Activated CD4-positive, alpha-beta T cell treated with anti-CD3 and anti-CD28 coated beads for 36 hours (primary cell): ENCODE measurements at regions of chr16 and their contacts with region 1.

Region 1: DNA sequence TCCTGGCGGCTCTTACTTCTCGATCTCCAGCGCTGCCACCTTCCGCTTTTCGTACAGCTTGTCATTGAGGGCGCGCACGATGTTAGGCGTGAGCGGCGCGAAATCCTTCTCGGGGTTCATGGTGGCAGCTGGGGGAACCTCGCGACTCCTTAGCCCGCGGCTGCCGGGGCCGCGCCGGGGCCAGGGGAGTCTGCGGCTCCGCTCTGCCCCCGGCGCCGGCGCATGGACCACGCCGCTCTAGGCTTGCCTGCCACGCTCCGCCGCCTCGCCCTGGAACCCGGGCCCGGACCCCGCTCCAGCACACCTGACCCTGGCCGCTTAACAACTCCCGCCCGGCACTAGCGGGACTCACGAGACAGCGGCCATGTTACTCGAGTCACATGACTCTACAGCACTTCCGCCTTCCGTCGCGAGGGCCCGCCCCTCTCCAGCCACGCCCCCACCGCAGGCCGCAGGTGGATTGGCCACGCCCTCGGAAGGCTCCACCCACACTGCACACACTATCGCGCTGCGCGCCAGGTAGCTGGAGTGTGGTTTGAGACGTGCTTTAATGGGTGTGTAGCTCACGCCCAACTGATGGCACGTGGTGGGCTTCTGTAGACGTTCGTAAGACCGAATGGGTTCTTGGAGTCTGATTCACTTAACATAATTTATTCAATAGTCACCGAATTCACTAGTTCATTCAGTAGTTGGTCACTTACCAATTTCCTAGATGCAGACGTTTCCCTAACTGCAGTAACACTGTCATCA is at the start of gene VAC14:
- DNase-seq: peak; percentile 98
- ATAC-seq: peak; percentile 95
- H3K4me3 Mint-ChIP-seq: peak within 1 kb of the TSS; percentile 90
- H3K27ac Mint-ChIP-seq: peak within 1 kb of the TSS; percentile 83
- H3K4me1 Mint-ChIP-seq: peaks cover 31% of the 10 kb centered on the region
- H3K27me3 Mint-ChIP-seq: no peaks in the 10 kb centered on the region
- total RNA-seq, gene VAC14: 24.8 to 26.2 TPM

Region 2: DNA sequence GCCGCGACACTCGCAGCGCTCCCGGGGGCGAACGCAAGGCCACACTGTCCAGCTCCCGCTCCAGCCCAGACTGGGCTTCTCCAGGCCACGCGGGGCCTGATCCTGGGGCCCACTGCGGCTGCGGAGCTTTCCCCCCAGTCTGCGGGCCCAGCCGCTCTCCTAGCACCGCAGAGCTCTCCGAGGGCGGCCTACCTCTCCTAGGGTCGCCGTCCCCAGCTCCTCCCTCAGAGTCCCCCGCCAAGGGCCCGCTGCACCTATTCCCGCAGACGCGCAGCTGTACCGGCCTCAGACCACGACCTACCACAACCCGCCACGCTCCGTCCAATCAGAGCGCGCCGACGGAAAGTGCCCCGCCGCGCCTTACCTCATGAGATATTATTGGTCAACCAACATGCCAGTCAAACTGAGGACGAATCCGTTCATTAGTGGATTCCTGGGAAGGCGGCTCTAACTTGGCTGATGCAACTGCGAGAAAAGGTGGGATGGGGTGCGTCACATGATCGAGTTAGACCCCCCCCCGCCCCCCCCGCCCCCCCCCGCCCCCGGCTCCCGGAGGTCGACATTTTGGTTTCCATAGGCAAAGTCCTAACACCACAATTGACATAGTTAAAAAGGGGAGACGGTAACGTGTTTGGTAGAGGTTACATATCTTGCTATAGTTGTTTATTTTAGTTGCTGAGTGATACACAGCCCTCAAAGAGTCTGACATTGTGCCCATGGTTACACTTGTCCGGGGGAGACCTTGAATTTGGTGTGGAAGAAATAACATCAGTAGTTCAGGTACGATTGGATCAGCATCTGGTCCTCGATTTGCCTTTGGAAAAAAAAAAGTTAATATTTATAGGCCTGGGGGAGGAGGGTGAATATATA is 511.5 kb before region 1 on chr16 and contains the start of gene AARS1:
- CTCF ChIA-PET with region 1: no interaction called
- POLR2A ChIA-PET with region 1: no interaction called
- intact Hi-C with region 1: loop called in 1 of 2 experiments (anchors 5 kb)
- DNase-seq: peak; percentile 96
- ATAC-seq: peak; percentile 99
- H3K4me3 Mint-ChIP-seq: peak within 1 kb of the TSS; percentile 92
- H3K27ac Mint-ChIP-seq: peak within 1 kb of the TSS; percentile 96
- H3K4me1 Mint-ChIP-seq: peaks cover 37% of the 10 kb centered on the region
- H3K27me3 Mint-ChIP-seq: no peaks in the 10 kb centered on the region
- total RNA-seq, gene AARS1: 180 to 189 TPM

Region 3: DNA sequence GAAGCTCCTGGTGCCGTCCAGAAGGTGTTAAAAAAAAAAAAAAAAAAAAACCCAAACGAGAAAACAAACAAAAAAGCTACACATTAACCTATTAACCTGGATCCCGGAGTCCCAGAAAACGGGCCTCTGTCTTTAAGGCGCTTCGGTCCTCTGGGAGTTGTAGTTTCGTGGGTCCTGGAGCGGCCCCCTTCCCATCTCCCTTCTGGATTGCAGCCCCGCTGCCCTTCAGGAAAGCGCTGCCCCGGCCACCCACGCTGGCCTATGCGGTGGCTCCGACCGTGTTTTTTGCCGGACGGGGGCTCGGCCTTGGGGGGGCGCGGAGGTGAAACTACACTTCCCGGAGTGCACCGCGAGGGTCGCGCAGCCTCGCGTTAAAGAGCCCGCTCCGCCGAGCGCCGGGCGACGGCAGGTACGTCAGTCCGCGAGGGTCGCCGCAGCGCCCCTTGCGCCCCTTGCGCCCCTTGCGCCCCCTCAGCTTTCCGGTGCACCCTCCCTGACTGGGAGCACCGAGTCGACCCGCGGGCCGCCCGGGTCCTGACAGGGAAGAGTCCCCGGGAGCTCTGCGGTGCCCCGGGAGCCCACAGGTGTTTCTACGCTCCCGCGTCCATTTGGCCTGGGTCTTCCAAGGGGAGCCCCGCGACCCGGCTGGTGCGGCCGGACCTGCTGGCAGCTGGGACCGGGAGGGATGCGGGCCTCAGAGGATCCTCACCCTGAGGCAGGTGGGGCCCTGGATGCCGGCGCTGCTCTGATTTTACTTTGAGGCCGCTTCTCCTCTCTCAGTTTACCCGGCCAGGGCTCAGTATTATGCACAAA is 346.5 kb before region 1 on chr16 and contains the start of gene FCSK:
- CTCF ChIA-PET with region 1: no interaction called
- POLR2A ChIA-PET with region 1: no interaction called
- intact Hi-C with region 1: loop called in 1 of 2 experiments (anchors 2 kb)
- DNase-seq: peak; percentile 79
- ATAC-seq: peak; percentile 94
- H3K4me3 Mint-ChIP-seq: peak within 1 kb of the TSS; percentile 85
- H3K27ac Mint-ChIP-seq: peak within 1 kb of the TSS; percentile 88
- H3K4me1 Mint-ChIP-seq: peaks cover 16% of the 10 kb centered on the region
- H3K27me3 Mint-ChIP-seq: no peaks in the 10 kb centered on the region
- total RNA-seq, gene FCSK: 10.3 to 13.4 TPM

Region 4: DNA sequence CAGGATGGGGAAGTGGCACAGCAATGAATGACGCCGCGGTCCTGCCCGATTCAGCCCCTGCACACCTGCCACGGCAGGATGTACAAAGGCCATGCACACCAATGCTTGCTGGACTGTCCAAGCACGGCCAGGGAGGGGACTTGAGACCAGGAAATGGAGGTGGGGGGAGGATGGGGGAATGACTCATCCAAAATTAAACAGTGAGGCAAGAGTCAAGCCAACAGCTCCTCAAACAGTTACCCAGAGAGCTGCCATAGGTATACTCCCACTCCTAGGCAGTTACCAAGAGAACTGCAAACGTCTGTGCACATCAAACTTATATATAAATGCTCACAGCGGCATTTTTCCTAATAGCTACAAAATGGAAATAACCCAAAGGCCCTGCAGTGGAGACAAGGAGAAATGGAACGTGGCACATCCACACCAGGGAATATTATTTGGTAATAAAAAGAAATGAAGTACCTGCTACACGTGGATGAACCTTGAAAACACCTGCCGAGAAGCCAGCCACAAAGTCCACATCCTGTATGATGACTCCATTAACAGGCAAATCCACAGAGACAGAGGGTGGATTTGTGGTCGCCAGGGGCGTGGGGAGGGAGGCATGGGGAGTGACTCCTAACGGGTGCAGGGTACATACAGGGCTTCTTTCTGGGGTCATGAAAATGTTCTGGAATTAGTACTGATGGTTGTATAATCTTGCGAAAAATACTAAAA is 54.1 kb before region 1 on chr16:
- CTCF ChIA-PET with region 1: no interaction called
- POLR2A ChIA-PET with region 1: no interaction called
- intact Hi-C with region 1: loop called in 1 of 2 experiments (anchors 2 kb)
- DNase-seq: peak; percentile 77
- ATAC-seq: peak; percentile 73
- H3K4me3 Mint-ChIP-seq: no peak overlapping the region
- H3K27ac Mint-ChIP-seq: peak overlapping the region; percentile 88
- H3K4me1 Mint-ChIP-seq: peaks cover 47% of the 10 kb centered on the region
- H3K27me3 Mint-ChIP-seq: no peaks in the 10 kb centered on the region

Region 5: DNA sequence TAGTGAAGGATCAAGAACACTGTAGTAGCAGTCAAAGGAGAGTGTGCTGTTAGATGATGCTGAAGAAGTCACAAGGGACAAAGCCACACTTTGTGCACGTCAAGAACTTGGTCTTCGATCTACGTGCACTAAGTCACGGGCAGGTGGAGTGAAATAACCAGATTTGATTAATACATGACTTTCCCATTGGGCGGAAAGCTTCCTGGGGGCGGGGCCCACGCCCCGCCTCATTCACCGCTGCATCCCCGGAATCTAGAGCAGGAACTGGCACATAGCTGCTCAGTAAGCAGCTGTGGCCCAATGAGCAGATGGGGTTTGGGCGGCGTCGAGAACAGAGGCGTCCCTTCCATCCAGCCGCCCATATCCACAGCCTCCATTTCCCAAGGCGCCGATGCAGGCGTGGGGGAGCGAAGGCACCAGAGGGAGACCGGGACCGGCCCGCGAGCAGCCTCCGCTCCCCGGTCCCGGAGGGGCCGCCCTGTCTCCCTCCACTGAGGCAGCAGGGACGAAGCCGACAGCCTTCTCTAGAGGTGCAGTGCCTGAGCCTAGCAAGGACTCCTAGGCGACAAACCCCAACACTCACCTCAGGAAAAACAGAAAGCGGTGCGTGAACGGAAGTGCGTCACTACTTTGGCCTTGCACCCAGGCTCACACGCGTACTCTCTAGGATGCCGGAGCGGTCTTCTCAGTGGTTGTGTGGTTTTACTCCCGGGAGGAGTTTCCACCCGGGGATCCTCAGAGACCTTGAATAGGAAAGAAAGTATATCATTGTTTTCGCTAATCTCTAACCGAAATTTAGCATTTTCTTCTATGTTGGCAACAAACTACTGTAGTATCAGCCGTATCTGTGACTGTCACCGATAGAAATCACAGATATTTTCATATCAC is 683.3 kb after region 1 on chr16:
- CTCF ChIA-PET with region 1: interaction called, 3 read pairs
- POLR2A ChIA-PET with region 1: no interaction called
- intact Hi-C with region 1: loop called in 1 of 2 experiments (anchors 1 kb)
- DNase-seq: peak; percentile 91
- ATAC-seq: peak; percentile 90
- H3K4me3 Mint-ChIP-seq: peak overlapping the region; percentile 75
- H3K27ac Mint-ChIP-seq: peak overlapping the region; percentile 90
- H3K4me1 Mint-ChIP-seq: peaks cover 14% of the 10 kb centered on the region
- H3K27me3 Mint-ChIP-seq: peaks cover 3% of the 10 kb centered on the region

Region 6: GRCh38 chr16:72008424-72009216 is 1207.7 kb after region 1 on chr16 and contains the start of gene DHODH:
- CTCF ChIA-PET with region 1: no interaction called
- POLR2A ChIA-PET with region 1: no interaction called
- intact Hi-C with region 1: loop called in 1 of 2 experiments (anchors 10 kb)
- DNase-seq: peak; percentile 99
- ATAC-seq: peak; percentile 99
- H3K4me3 Mint-ChIP-seq: peak within 1 kb of the TSS; percentile 94
- H3K27ac Mint-ChIP-seq: peak within 1 kb of the TSS; percentile 96
- H3K4me1 Mint-ChIP-seq: peaks cover 21% of the 10 kb centered on the region
- H3K27me3 Mint-ChIP-seq: no peaks in the 10 kb centered on the region
- total RNA-seq, gene DHODH: 15.5 to 21.4 TPM